Upper lobe of right lung (tissue), 1 donor: ENCODE measurements at regions of chr17 and their contacts with region 1.

Region 1: GRCh38 chr17:65556014-65556909 is 5.2 kb downstream of the AXIN2 start:
- DNase-seq: peak; percentile 95
- ATAC-seq: peak; percentile 63
- H3K4me3 ChIP-seq: no peak overlapping the region
- H3K27ac ChIP-seq: no peak overlapping the region
- H3K4me1 ChIP-seq: peaks cover 32% of the 10 kb centered on the region
- H3K27me3 ChIP-seq: no peaks in the 10 kb centered on the region
- CTCF ChIP-seq: peak; percentile 92

Region 2: DNA sequence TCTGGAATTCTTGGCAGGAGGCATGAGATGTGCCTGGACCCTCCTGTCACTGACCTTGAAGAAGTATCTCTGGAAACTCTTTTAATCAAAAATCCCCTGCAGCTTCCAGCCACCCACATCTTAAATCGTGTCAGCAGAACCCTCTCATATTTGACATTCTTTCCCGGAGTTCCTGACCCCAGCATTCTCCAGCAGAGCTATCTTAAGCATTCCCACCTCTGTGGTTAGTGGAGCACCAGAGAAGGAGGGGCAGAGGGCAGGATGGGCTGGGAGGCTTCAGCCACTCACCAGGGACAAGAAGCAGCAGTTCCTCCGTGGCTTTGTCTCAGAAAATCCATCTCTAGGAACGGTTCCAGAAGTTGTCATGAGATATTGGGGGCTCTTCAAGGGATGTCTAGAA is 269.2 kb before region 1 on chr17:
- intact Hi-C with region 1: loop called (anchors 10 kb)
- DNase-seq: no peak
- ATAC-seq: peak; percentile 36
- H3K4me3 ChIP-seq: no peak overlapping the region
- H3K27ac ChIP-seq: no peak overlapping the region
- H3K4me1 ChIP-seq: no peaks in the 10 kb centered on the region
- H3K27me3 ChIP-seq: no peaks in the 10 kb centered on the region
- CTCF ChIP-seq: no peak

Region 3: DNA sequence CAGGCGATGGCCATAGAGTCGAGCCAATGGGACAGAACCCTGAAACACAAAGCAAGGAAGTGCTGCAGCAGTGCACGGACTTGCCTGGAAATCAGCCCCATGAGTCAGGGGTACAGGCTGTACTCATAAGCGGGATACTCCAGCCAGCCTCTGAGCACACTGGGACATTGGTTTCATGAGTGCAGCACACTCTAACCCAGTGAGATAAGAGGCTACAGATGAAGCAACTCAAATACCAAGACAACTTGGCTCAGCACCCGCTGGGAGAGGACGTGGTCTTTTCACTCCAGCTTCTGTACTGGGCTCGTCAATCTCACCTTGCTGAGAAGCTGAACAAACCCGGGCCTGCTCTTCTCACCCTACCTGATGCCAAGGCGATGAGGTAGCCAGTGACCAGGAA is 93.0 kb before region 1 on chr17:
- intact Hi-C with region 1: loop called (anchors 10 kb)
- DNase-seq: peak; percentile 85
- ATAC-seq: peak; percentile 97
- H3K4me3 ChIP-seq: no peak overlapping the region
- H3K27ac ChIP-seq: peak overlapping the region; percentile 85
- H3K4me1 ChIP-seq: peaks cover 17% of the 10 kb centered on the region
- H3K27me3 ChIP-seq: no peaks in the 10 kb centered on the region
- CTCF ChIP-seq: no peak